ENCODE measurements at regions of chr14 and their contacts with region 1.

Region 1: DNA sequence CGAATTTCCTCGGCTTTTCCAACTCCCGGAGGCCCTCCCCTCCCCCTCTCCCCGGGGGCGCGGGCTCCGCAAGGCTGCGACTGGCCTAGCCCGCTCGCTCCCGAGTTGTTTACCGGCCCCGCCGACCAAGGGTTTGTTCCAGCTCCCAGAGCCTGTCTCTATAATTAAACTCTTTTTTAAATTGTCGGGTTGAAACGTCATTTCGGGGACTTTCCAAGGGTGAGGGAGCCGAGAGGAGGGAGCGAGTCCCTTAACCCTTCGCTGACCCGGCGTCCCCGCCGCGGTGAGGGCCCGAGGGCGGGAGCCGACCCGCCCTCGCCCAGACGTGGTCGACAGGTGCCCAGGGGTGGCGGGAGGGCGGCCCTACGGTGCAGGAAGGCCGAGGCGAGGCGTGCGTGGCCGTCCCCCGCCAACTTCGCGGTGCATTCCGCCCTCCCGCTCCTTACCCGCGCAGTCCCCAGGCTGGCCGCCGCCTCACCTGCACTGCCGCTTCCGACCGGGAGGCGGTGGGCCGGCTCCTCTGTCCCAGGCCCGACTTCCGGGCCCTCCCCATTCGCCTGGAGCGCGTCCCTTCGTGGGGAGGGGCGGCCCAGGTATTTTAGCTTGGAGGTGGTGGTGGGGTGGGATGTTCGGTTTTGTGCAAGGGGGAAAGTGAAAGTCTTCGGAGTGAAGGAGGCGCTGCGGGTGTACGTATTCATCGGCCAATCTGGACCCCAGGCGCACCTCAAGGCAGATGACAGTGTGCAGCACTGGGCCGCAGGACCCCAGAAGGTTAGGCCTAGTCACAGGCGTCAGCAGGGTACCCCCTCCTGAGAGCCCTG is 2.9 kb upstream of the ZFP36L1 start:
- DNase-seq: peak; percentile 91
- H3K4me3 Mint-ChIP-seq: peak overlapping the region; percentile 85
- H3K27ac Mint-ChIP-seq: peak overlapping the region; percentile 81
- H3K4me1 Mint-ChIP-seq: peaks cover 23% of the 10 kb centered on the region
- H3K27me3 Mint-ChIP-seq: no peaks in the 10 kb centered on the region
- CTCF ChIP-seq: peak; percentile 73

Region 2: DNA sequence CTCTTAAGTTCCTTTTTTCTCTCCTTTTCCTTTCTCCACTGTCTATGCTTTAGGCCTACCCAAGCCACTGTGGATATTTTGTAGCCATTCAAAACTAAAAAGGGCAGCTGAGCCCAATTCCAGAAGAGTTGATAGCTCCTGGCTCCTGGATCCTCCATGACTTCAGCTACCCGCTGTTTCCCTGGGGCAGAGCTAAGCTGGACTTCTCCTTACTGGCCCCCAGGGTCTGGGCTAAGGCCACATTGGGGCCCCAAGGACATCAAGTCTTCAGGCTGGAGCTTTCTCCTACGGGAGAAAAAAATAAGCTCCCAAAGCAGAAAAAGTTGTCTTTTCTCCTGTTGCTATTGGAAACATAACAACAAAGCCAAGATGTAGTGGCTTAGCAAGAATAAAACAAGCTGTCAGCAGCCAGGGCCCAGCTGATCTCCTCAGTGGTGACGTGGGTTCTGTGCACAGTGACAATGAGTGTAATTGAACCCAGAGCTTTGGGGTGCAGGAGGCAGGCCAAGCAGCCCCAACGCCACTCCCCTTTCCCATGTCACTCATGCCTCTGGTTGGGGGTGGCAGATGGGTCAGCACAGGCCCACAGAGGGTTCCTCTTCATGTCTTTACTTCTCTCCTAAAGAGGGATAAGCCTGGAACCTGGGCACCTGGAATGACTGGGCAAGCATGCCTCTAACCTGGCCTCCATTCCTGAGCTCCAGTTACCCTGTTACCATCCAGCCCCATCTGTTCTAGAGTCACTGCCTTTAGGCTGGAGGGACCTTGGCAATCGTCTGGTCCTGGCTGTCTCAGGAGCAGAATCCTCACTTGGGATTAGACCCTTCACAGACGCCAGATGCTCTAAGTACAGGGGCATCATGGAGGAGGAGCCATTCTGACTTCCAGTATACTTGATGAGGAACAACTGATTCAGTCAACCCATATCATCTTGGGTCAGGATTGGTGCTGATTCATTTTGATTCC is 174.1 kb before region 1 on chr14:
- CTCF ChIA-PET with region 1: interaction called, 10 read pairs
- intact Hi-C with region 1: no loop called
- DNase-seq: no peak
- H3K4me3 Mint-ChIP-seq: no peak overlapping the region
- H3K27ac Mint-ChIP-seq: no peak overlapping the region
- H3K4me1 Mint-ChIP-seq: no peaks in the 10 kb centered on the region
- H3K27me3 Mint-ChIP-seq: no peaks in the 10 kb centered on the region
- CTCF ChIP-seq: no peak

Region 3: GRCh38 chr14:68749487-68750475 is 46.0 kb before region 1 on chr14:
- CTCF ChIA-PET with region 1: no interaction called
- intact Hi-C with region 1: no loop called
- DNase-seq: no peak
- H3K4me3 Mint-ChIP-seq: no peak overlapping the region
- H3K27ac Mint-ChIP-seq: no peak overlapping the region
- H3K4me1 Mint-ChIP-seq: no peaks in the 10 kb centered on the region
- H3K27me3 Mint-ChIP-seq: peaks cover 14% of the 10 kb centered on the region
- CTCF ChIP-seq: no peak

Region 4: DNA sequence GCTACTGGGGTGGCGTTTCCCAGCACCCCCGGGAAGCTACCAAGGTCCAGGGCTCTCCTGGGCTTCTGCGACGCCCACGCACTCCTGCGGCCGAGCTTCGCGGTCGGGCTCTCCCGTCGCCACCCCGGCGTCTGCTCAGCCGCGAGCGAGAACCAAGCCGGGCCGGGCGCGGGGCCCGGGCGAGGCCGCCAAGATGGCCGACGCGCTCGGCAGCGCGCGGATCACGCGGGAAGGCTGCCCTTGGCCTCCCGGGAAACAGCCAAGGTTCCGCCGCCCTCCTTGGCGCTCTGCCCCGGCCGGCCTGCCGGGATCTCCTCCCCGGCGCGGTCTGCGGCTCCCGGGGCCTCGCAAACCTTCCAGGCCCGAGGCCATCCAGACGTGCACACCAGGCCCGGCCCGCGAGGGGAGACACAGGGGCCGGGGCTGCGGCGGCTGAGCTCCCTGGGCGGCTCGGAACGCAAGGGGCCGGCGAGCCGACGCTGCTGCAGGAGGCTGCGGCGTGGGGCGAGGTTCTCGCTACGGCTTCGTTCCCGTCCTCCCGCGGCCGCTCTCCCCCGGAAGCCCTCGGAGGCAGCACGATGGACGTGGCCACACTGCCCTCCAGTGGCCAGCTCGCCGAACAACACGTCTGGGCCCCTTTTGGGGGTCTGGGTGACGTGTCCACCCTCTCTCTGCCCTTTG is 20.6 kb after region 1 on chr14:
- CTCF ChIA-PET with region 1: interaction called, 12 read pairs
- intact Hi-C with region 1: loop called (anchors 2 kb)
- DNase-seq: peak; percentile 90
- H3K4me3 Mint-ChIP-seq: peak overlapping the region; percentile 59
- H3K27ac Mint-ChIP-seq: peak overlapping the region; percentile 87
- H3K4me1 Mint-ChIP-seq: peaks cover 24% of the 10 kb centered on the region
- H3K27me3 Mint-ChIP-seq: no peaks in the 10 kb centered on the region
- CTCF ChIP-seq: peak; percentile 92

Region 5: DNA sequence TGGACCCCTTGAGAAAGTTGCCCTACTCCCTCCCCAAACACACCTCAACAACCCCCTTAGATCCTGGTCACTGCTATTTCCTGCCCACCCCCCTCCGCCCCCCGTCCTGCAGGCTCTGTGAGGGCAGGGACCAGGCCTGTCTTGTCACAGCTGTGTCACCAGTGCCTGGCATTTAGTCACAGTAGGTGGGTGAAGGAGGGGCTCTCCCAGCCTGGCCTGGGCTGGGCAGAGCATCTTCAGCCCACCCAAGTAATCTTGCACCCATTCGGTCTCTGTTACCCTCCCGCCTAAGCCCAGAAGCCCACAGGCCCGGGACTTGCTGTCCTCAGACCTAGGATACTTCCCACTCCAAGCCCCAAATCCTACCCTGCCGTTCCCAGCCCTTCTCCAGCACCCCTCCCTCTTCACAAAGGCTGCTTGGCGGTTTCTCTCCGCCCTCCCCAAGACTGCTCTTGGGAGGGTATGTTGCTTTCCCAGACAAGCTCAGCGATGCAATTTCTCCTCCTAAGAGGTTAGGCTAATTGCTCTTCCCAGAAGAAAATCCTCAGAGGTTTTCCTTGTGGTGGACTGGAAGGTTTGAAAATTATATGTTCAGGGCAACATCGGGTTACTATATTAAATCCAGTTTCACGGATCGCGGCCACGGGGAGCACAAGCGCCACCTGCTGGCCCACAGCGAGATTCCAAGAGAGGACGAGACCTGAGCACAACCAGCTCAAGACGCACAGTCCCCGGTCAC is 47.8 kb after region 1 on chr14:
- CTCF ChIA-PET with region 1: interaction called, 12 read pairs
- intact Hi-C with region 1: no loop called
- DNase-seq: peak; percentile 75
- H3K4me3 Mint-ChIP-seq: peak overlapping the region; percentile 40
- H3K27ac Mint-ChIP-seq: no peak overlapping the region
- H3K4me1 Mint-ChIP-seq: peaks cover 28% of the 10 kb centered on the region
- H3K27me3 Mint-ChIP-seq: no peaks in the 10 kb centered on the region
- CTCF ChIP-seq: peak; percentile 79